ENCODE measurements at regions of chr7 and their contacts with region 1.

Region 1: DNA sequence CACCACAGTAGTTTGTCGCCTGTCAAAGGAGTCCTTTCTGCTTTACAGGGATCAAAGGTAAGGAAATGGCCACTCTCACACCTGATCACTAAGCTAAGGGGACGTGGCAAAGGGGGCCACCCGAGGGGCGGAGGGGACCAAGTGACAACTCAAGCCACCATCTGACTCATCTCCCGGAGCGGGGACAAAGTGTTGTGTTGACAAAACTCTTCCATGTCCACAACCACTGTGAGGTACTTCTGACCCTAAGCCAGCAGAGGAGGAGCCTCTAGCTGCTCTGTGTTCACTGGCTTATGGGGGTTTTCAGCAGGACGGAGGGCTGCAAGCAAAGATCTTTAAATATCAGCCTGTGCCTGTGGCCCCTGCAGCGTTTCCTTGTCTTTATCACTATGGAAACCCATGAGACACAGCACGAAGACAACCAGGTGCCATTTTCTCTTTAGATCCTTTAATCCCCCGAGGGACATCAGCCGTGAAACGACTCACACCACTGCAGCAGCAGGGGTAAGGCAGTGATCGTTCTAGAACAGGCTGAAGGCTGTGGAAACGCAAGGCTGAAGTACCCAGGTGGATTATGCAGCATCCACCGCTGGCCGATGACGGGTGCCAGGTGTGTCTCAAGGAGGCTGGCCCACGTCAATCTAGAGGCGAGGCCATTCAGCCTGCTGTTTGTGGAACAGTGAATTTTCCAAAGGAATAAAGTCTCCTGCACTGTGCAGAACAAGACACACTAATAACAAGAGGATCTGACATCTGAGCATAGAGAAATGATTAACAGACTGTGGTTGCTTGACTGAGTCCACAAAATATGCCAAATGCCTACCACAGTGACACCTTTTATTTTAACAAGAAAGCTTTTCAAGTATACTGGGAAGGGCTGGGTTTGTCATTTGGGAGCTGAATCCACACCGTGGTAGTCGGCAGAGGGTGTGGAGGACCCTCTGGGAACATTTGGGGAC is 26.6 kb upstream of the DDC start:
- DNase-seq: no peak
- ATAC-seq: no peak
- H3K4me3 ChIP-seq: no peak overlapping the region
- H3K27ac ChIP-seq: no peak overlapping the region
- H3K4me1 ChIP-seq: peaks cover 17% of the 10 kb centered on the region
- H3K27me3 ChIP-seq: no peaks in the 10 kb centered on the region
- CTCF ChIP-seq: no peak

Region 2: GRCh38 chr7:50474382-50475160 is 117.2 kb before region 1 on chr7:
- intact Hi-C with region 1: loop called in 1 of 2 experiments (anchors 5 kb)
- DNase-seq: no peak
- ATAC-seq: peak; percentile 57 to 73 (median 64)
- H3K4me3 ChIP-seq: no peak overlapping the region
- H3K27ac ChIP-seq: peak overlapping the region; percentile 73
- H3K4me1 ChIP-seq: peaks cover 27% of the 10 kb centered on the region
- H3K27me3 ChIP-seq: no peaks in the 10 kb centered on the region
- CTCF ChIP-seq: no peak

Region 3: DNA sequence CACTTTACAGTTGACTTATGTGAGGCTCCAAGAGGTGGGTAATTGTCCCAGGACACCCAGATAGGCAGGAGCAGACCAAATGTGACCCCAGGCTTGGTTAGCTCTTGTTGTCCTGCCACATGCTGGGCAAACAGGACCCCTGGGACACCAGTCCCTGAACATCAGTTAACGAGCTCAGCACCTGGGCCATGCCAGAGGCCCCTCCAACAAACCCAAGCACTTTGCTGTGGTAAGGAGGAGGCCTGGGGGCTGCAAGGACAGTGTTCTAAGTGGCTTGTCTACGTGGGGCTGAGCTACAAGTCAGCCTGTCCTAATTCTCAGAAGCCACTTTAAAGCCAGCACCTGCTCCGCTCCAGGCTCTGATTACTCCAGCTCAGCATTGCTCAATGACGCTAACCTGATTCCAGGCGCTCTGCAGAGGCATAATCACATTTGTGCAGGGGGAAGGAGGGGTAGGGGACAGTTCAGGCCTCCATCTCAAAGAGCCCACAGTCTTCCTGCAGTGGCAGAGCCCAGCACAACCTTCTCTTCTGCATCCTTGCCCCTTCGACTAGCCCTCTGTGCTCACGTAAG is 83.8 kb before region 1 on chr7:
- intact Hi-C with region 1: loop called in 1 of 2 experiments (anchors 5 kb)
- DNase-seq: peak; percentile 52 to 78
- ATAC-seq: peak; percentile 87 to 92 (median 89)
- H3K4me3 ChIP-seq: no peak overlapping the region
- H3K27ac ChIP-seq: peak overlapping the region; percentile 94
- H3K4me1 ChIP-seq: peaks cover 60% of the 10 kb centered on the region
- H3K27me3 ChIP-seq: no peaks in the 10 kb centered on the region
- CTCF ChIP-seq: no peak

Measured in psoas muscle (tissue), 8 donors.